GM12878 (cell line): ENCODE measurements at regions of chr17 and their contacts with region 1.

Region 1: DNA sequence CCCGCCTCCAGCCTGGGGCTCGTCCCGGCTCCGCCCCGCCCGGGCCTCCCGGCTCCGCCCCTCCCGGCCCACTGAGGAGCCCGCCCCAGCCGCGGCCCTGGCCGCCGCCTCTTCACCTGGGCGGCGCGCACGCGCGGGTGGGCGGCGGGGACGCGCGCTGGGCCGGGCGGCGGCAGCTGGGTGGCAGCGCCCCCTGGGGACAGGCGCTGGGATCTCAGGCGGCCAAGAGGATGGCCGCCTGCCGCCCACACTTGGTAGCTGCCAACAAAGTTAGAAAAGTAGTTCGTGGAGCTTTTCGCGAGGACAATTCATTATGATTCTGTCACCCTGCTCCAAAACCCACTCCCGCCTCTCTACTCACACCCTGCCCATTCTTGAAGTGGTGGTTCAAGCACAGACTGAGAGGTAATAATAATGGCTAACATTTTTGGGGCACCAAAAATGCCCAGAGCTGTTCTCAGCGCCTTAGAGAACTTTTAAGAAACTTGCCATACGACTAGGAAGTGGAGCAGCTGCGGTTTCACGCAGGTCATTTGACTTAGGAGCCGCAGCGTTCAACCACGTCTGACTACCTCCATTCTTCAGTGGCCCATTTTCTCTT is 340 bp upstream of the MYO1D start:
- DNase-seq: peak; percentile 37
- ATAC-seq: peak; percentile 92
- H3K4me3 ChIP-seq: peak overlapping the region; percentile 51
- H3K27ac ChIP-seq: peak overlapping the region; percentile 66
- H3K4me1 ChIP-seq: no peaks in the 10 kb centered on the region
- H3K27me3 ChIP-seq: no peaks in the 10 kb centered on the region
- CTCF ChIP-seq: peak; percentile 83 to 94 (median 88); a peak in 5 of 6 replicates
- EP300 ChIP-seq: no peak
- POLR2A ChIP-seq: no peak
- RAD21 ChIP-seq: peak; percentile 80

Region 2: GRCh38 chr17:32794533-32795246 is 82.6 kb before region 1 on chr17:
- CTCF ChIA-PET with region 1: interaction called, 53 read pairs
- POLR2A ChIA-PET with region 1: interaction called, 3 read pairs
- RAD21 ChIA-PET with region 1: interaction called, 30 read pairs
- SMC1A ChIA-PET with region 1: interaction called, 31 read pairs
- in situ Hi-C with region 1: no loop called
- intact Hi-C with region 1: no loop called
- DNase-seq: no peak
- ATAC-seq: no peak
- H3K4me3 ChIP-seq: no peak overlapping the region
- H3K27ac ChIP-seq: no peak overlapping the region
- H3K4me1 ChIP-seq: peaks cover 6% of the 10 kb centered on the region
- H3K27me3 ChIP-seq: no peaks in the 10 kb centered on the region
- CTCF ChIP-seq: no peak
- EP300 ChIP-seq: no peak
- POLR2A ChIP-seq: no peak
- RAD21 ChIP-seq: no peak

Region 3: GRCh38 chr17:32828822-32829221 is 48.4 kb before region 1 on chr17:
- CTCF ChIA-PET with region 1: interaction called, 146 read pairs
- POLR2A ChIA-PET with region 1: interaction called, 36 read pairs
- RAD21 ChIA-PET with region 1: interaction called, 198 read pairs
- SMC1A ChIA-PET with region 1: interaction called, 231 read pairs
- in situ Hi-C with region 1: no loop called
- intact Hi-C with region 1: loop called (anchors 2 kb)
- DNase-seq: no peak
- ATAC-seq: peak; percentile 16
- H3K4me3 ChIP-seq: peak overlapping the region; percentile 35
- H3K27ac ChIP-seq: peak overlapping the region; percentile 88
- H3K4me1 ChIP-seq: peaks cover 48% of the 10 kb centered on the region
- H3K27me3 ChIP-seq: no peaks in the 10 kb centered on the region
- CTCF ChIP-seq: no peak
- EP300 ChIP-seq: no peak
- POLR2A ChIP-seq: no peak
- RAD21 ChIP-seq: no peak

Region 4: GRCh38 chr17:32854207-32854606 is 23.1 kb before region 1 on chr17:
- CTCF ChIA-PET with region 1: interaction called, 112 read pairs
- POLR2A ChIA-PET with region 1: interaction called, 21 read pairs
- RAD21 ChIA-PET with region 1: interaction called, 20 read pairs
- SMC1A ChIA-PET with region 1: interaction called, 127 read pairs
- in situ Hi-C with region 1: no loop called
- intact Hi-C with region 1: no loop called
- DNase-seq: no peak
- ATAC-seq: no peak
- H3K4me3 ChIP-seq: no peak overlapping the region
- H3K27ac ChIP-seq: no peak overlapping the region
- H3K4me1 ChIP-seq: no peaks in the 10 kb centered on the region
- H3K27me3 ChIP-seq: no peaks in the 10 kb centered on the region
- CTCF ChIP-seq: no peak
- EP300 ChIP-seq: no peak
- POLR2A ChIP-seq: no peak
- RAD21 ChIP-seq: no peak

Region 5: GRCh38 chr17:32909787-32910369 is 32.6 kb after region 1 on chr17:
- CTCF ChIA-PET with region 1: interaction called, 139 read pairs
- POLR2A ChIA-PET with region 1: interaction called, 3 read pairs
- RAD21 ChIA-PET with region 1: interaction called, 60 read pairs
- SMC1A ChIA-PET with region 1: interaction called, 96 read pairs
- in situ Hi-C with region 1: no loop called
- intact Hi-C with region 1: no loop called
- DNase-seq: peak; percentile 46
- ATAC-seq: peak; percentile 97
- H3K4me3 ChIP-seq: no peak overlapping the region
- H3K27ac ChIP-seq: no peak overlapping the region
- H3K4me1 ChIP-seq: no peaks in the 10 kb centered on the region
- H3K27me3 ChIP-seq: no peaks in the 10 kb centered on the region
- CTCF ChIP-seq: peak; percentile 85 to 94 (median 91)
- EP300 ChIP-seq: no peak
- POLR2A ChIP-seq: no peak
- RAD21 ChIP-seq: peak; percentile 87

Region 6: GRCh38 chr17:32936894-32937500 is 59.7 kb after region 1 on chr17:
- CTCF ChIA-PET with region 1: interaction called, 29 read pairs
- POLR2A ChIA-PET with region 1: interaction called, 5 read pairs
- RAD21 ChIA-PET with region 1: interaction called, 15 read pairs
- SMC1A ChIA-PET with region 1: interaction called, 6 read pairs
- in situ Hi-C with region 1: no loop called
- intact Hi-C with region 1: no loop called
- DNase-seq: no peak
- ATAC-seq: peak; percentile 97
- H3K4me3 ChIP-seq: no peak overlapping the region
- H3K27ac ChIP-seq: no peak overlapping the region
- H3K4me1 ChIP-seq: no peaks in the 10 kb centered on the region
- H3K27me3 ChIP-seq: no peaks in the 10 kb centered on the region; a peak in 1 of 4 replicates
- CTCF ChIP-seq: peak; percentile 84 to 89 (median 86)
- EP300 ChIP-seq: no peak
- POLR2A ChIP-seq: no peak
- RAD21 ChIP-seq: peak; percentile 68

Region 7: DNA sequence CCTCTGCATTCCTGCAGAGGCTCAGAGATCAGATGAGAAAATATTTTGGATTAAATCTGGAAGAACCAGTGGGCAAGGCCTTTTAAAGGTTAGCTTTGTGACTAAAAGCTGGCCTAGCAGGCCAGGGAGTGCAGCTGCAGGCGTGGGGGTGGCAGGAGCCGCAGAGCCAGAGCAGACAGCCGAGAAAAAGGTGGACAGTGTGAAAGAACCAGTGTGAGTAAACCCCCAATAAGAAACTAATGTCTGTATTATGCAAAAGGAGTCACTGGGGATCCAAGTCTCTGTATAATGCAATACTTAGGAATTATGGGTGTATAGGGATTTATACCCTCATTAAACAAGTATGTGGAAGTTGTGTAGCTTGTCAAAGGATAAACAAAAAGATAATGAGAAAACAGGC is 93.0 kb after region 1 on chr17:
- CTCF ChIA-PET with region 1: no interaction called
- POLR2A ChIA-PET with region 1: no interaction called
- RAD21 ChIA-PET with region 1: no interaction called
- SMC1A ChIA-PET with region 1: no interaction called
- in situ Hi-C with region 1: no loop called
- intact Hi-C with region 1: no loop called
- DNase-seq: peak; percentile 39
- ATAC-seq: peak; percentile 95
- H3K4me3 ChIP-seq: no peak overlapping the region
- H3K27ac ChIP-seq: peak overlapping the region; percentile 31; the same call in 1 of the 2 replicates
- H3K4me1 ChIP-seq: peaks cover 10% of the 10 kb centered on the region; the same call in 1 of the 2 replicates
- H3K27me3 ChIP-seq: no peaks in the 10 kb centered on the region
- CTCF ChIP-seq: no peak
- EP300 ChIP-seq: no peak
- POLR2A ChIP-seq: no peak
- RAD21 ChIP-seq: no peak

Region 8: DNA sequence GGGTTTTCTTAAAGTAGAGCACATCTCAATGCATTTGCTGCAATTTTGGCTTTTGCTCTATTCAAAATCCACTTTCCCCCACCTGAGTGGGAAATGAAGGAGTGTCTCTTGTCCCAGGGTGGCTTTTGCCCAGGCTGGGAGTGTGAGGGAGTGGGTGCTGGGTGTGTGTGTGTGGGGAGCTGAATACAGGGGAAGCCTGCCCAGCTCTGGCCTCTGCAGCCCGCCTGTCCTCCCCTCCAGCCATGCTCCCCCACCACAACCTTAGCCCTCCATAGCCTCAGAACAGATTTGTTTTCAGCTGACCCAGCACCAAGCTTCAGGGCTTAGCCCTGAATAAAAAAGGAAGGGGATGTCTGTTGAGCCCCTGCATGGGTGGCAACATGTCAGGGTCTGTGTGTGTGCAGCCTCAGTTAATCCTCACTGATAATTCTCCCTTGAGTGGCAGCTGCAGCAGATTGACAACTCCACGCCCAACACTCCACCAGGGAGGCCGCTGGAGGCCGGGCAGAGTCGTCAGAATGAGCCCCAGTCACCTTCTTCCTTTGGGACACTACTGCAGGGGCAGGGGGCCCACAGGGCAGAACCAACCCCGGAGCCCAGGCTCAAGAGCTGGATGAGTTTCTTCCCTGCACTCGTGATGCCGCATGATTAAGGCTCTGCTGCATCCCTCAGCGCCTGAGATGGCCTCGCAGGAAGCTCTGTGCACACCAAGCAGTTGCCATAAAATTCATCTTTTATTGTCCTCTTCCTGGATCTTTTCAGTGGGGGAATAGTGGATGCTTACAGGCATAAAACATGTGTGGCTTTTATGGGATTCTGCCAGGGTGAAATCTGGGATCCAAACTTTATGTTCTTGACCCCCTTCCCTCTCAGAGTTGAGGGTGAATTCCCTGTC is 169.3 kb after region 1 on chr17:
- CTCF ChIA-PET with region 1: no interaction called
- POLR2A ChIA-PET with region 1: no interaction called
- RAD21 ChIA-PET with region 1: no interaction called
- SMC1A ChIA-PET with region 1: no interaction called
- in situ Hi-C with region 1: no loop called
- intact Hi-C with region 1: no loop called
- DNase-seq: no peak
- ATAC-seq: no peak
- H3K4me3 ChIP-seq: no peak overlapping the region
- H3K27ac ChIP-seq: no peak overlapping the region
- H3K4me1 ChIP-seq: no peaks in the 10 kb centered on the region
- H3K27me3 ChIP-seq: no peaks in the 10 kb centered on the region; a peak in 1 of 4 replicates
- CTCF ChIP-seq: no peak
- EP300 ChIP-seq: no peak
- POLR2A ChIP-seq: no peak
- RAD21 ChIP-seq: no peak